Transverse colon (tissue), 4 donors: ENCODE measurements at regions of chr19 and their contacts with region 1.

Region 1: GRCh38 chr19:1357531-1358109 is 26.1 kb upstream of the NDUFS7 start:
- DNase-seq: no peak
- H3K4me3 ChIP-seq: no peak overlapping the region
- H3K27ac ChIP-seq: no peak overlapping the region
- H3K4me1 ChIP-seq: peaks cover 21 to 45% (median 37%) of the 10 kb centered on the region in 4 donors
- H3K27me3 ChIP-seq: no peaks in the 10 kb centered on the region
- CTCF ChIP-seq: no peak
- EP300 ChIP-seq: no peak
- POLR2A ChIP-seq: no peak

Region 2: DNA sequence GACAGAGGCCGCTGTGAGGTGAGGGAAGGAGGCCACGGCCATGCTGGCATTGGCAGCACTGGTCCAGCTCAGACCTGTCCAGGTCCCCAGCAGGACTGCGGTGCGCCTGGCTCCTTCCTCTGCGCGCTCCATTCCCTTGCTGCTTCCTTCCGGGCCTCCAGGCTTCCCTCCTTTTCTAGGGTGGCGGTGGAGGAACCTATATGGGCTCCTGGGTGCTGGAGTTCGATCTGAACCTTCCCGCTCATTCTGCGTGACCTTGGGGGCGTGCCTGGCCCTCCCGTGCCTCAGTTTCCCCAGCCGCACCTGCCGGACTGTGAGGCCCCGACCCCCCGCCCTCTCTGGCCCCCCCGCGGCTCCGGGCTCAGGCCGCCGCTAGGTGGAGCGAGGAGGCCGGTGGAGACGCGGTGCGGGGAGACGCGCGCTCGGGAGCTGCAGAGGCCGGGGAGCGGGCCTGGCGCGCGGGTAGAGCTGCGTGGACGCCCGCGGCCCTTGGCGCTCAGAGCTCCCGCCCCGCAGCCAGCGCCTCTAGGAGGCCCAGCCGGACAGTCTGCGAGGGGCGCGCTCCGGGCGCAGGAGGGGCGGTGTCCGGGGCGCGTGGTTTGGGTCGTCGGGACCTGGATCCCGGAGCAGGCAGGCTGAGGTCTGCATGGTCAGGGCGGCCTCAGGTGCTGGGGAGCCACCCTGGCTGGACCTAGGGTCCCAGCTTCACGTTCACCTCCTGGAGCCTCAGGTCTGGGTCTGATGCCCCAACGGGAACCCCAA is 42.0 kb before region 1 on chr19:
- in situ Hi-C with region 1: no loop called
- intact Hi-C with region 1: loop called (anchors 1 kb)
- DNase-seq: peak; percentile 64
- H3K4me3 ChIP-seq: peak overlapping the region in 3 of 4 donors; percentile 1 to 41 (median 31)
- H3K27ac ChIP-seq: peak overlapping the region in 1 of 4 donors; percentile 4
- H3K4me1 ChIP-seq: peaks cover 0 to 27% (median 14%) of the 10 kb centered on the region in 4 donors
- H3K27me3 ChIP-seq: peaks cover 84% of the 10 kb centered on the region
- CTCF ChIP-seq: peak; percentile 64 to 83 (median 65)
- EP300 ChIP-seq: no peak
- POLR2A ChIP-seq: no peak

Region 3: GRCh38 chr19:1429750-1430149 is 72.1 kb after region 1 on chr19:
- in situ Hi-C with region 1: no loop called
- intact Hi-C with region 1: no loop called
- DNase-seq: peak; percentile 36
- H3K4me3 ChIP-seq: no peak overlapping the region
- H3K27ac ChIP-seq: peak overlapping the region in 1 of 4 donors; percentile 28
- H3K4me1 ChIP-seq: peaks cover 0 to 3% (median 0%) of the 10 kb centered on the region in 4 donors
- H3K27me3 ChIP-seq: no peaks in the 10 kb centered on the region
- CTCF ChIP-seq: no peak
- EP300 ChIP-seq: no peak
- POLR2A ChIP-seq: no peak